ENCODE measurements at regions of chr1 and their contacts with region 1.

Region 1: GRCh38 chr1:31605908-31606427 is 11.5 kb upstream of the HCRTR1 start:
- DNase-seq: no peak
- H3K4me3 ChIP-seq: no peak overlapping the region
- H3K27ac ChIP-seq: no peak overlapping the region
- H3K4me1 ChIP-seq: no peaks in the 10 kb centered on the region
- H3K27me3 ChIP-seq: no peaks in the 10 kb centered on the region
- CTCF ChIP-seq: no peak
- EP300 ChIP-seq: no peak
- POLR2A ChIP-seq: no peak
- RAD21 ChIP-seq: no peak

Region 2: GRCh38 chr1:31593770-31594632 is 12.0 kb before region 1 on chr1:
- CTCF ChIA-PET with region 1: interaction called, 15 read pairs
- POLR2A ChIA-PET with region 1: no interaction called
- DNase-seq: peak; percentile 62 to 96
- H3K4me3 ChIP-seq: no peak overlapping the region
- H3K27ac ChIP-seq: no peak overlapping the region
- H3K4me1 ChIP-seq: peaks cover 0 to under 1% (median 0%) of the 10 kb centered on the region in 4 experiments; a peak in 2 of 7 replicates
- H3K27me3 ChIP-seq: peaks cover 0 to 1% (median under 1%) of the 10 kb centered on the region in 4 experiments; a peak in 1 of 7 replicates
- CTCF ChIP-seq: peak; percentile 96 to 100 (median 99)
- EP300 ChIP-seq: no peak
- POLR2A ChIP-seq: no peak
- RAD21 ChIP-seq: peak; percentile 87 to 91

Measured in H1 (cell line).